Activated CD4-positive, alpha-beta memory T cell treated with anti-CD3 and anti-CD28 coated beads for 36 hours (primary cell): ENCODE measurements at regions of chr11 and their contacts with region 1.

Region 1: GRCh38 chr11:31141789-31142188 is 227.8 kb downstream of the DCDC1 start:
- DNase-seq: no peak
- H3K4me3 Mint-ChIP-seq: no peak overlapping the region
- H3K27ac Mint-ChIP-seq: no peak overlapping the region
- H3K4me1 Mint-ChIP-seq: no peaks in the 10 kb centered on the region
- H3K27me3 Mint-ChIP-seq: no peaks in the 10 kb centered on the region

Region 2: GRCh38 chr11:31069447-31070205 is 72.2 kb before region 1 on chr11:
- CTCF ChIA-PET with region 1: no interaction called
- POLR2A ChIA-PET with region 1: no interaction called
- intact Hi-C with region 1: loop called (anchors 2 kb)
- DNase-seq: no peak
- H3K4me3 Mint-ChIP-seq: no peak overlapping the region
- H3K27ac Mint-ChIP-seq: no peak overlapping the region
- H3K4me1 Mint-ChIP-seq: no peaks in the 10 kb centered on the region
- H3K27me3 Mint-ChIP-seq: no peaks in the 10 kb centered on the region

Region 3: DNA sequence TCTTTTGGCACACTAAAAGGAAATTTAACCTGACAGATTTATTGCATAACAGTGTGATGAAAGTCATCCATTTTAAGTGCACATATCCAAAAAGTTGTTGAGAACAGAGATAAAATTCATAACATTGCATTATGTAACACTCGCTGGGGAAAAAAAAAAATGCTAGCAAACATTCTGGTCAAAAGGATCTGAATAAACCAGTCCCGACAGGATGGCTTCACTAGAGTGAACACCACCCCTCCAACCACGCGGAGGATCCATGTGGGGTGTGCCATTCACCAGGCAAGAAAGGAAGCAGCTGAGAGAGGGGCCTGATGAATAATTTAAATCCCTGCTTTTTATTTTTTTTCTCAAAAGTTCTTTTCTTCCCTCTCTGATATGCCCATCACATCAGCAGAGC is 31.0 kb before region 1 on chr11:
- CTCF ChIA-PET with region 1: no interaction called
- POLR2A ChIA-PET with region 1: no interaction called
- intact Hi-C with region 1: no loop called
- DNase-seq: no peak
- H3K4me3 Mint-ChIP-seq: no peak overlapping the region
- H3K27ac Mint-ChIP-seq: no peak overlapping the region
- H3K4me1 Mint-ChIP-seq: no peaks in the 10 kb centered on the region
- H3K27me3 Mint-ChIP-seq: peaks cover 2% of the 10 kb centered on the region